ENCODE measurements at regions of chr2 and their contacts with region 1.

Region 1: GRCh38 chr2:28751252-28751955 is at the start of gene PPP1CB:
- DNase-seq: peak; percentile 96
- ATAC-seq: peak; percentile 92
- H3K4me3 ChIP-seq: peak within 1 kb of the TSS; percentile 93
- H3K27ac ChIP-seq: peak within 1 kb of the TSS; percentile 99
- H3K4me1 ChIP-seq: peaks cover 9% of the 10 kb centered on the region
- H3K27me3 ChIP-seq: no peaks in the 10 kb centered on the region
- CTCF ChIP-seq: peak; percentile 38
- POLR2A ChIP-seq: peak; percentile 72; the same call in 1 of the 2 replicates
- RAD21 ChIP-seq: peak; percentile 14; the same call in 1 of the 2 replicates
- total RNA-seq, gene PPP1CB: 111 and 271 TPM in 2 replicates

Region 2: GRCh38 chr2:28583899-28584553 is 167.4 kb before region 1 on chr2:
- CTCF ChIA-PET with region 1: no interaction called
- POLR2A ChIA-PET with region 1: no interaction called
- dilution Hi-C with region 1: no loop called
- in situ Hi-C with region 1: loop called (anchors 5 kb)
- intact Hi-C with region 1: no loop called
- DNase-seq: peak; percentile 97
- ATAC-seq: peak; percentile 95
- H3K4me3 ChIP-seq: peak overlapping the region; percentile 9; the same call in 1 of the 2 replicates
- H3K27ac ChIP-seq: peak overlapping the region; percentile 82
- H3K4me1 ChIP-seq: peaks cover 13% of the 10 kb centered on the region
- H3K27me3 ChIP-seq: no peaks in the 10 kb centered on the region
- CTCF ChIP-seq: no peak
- POLR2A ChIP-seq: no peak
- RAD21 ChIP-seq: no peak

Region 3: DNA sequence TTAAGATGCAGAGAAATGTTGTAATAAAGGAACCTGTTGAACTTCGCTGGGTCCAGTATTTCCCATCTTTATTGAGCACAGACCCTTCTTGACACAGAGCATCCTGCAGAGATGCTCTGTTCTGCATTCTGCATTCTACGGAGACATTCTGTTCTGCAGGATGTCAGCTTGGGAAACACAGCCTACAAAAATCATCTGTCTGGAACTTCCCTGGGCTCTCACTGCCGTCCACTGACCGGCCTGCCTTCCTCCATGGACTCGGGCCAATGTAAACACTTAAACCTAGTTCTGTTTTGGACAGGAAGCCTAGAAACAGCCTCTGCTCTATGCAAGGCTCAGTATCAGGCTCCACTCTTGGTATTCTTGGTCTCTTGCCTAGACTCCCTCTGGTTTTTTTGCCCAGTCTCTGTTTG is 89.8 kb before region 1 on chr2:
- CTCF ChIA-PET with region 1: interaction called, 6 read pairs
- POLR2A ChIA-PET with region 1: interaction called, 3 read pairs
- dilution Hi-C with region 1: no loop called
- in situ Hi-C with region 1: no loop called
- intact Hi-C with region 1: loop called (anchors 1 kb)
- DNase-seq: peak; percentile 88
- ATAC-seq: peak; percentile 5
- H3K4me3 ChIP-seq: no peak overlapping the region
- H3K27ac ChIP-seq: peak overlapping the region; percentile 49; the same call in 1 of the 2 replicates
- H3K4me1 ChIP-seq: peaks cover 34% of the 10 kb centered on the region
- H3K27me3 ChIP-seq: no peaks in the 10 kb centered on the region
- CTCF ChIP-seq: no peak
- POLR2A ChIP-seq: no peak
- RAD21 ChIP-seq: no peak; the same call in 1 of the 2 replicates

Region 4: GRCh38 chr2:28716265-28716867 is 35.0 kb before region 1 on chr2:
- CTCF ChIA-PET with region 1: interaction called, 3 read pairs
- POLR2A ChIA-PET with region 1: no interaction called
- dilution Hi-C with region 1: no loop called
- in situ Hi-C with region 1: no loop called
- intact Hi-C with region 1: loop called (anchors 2 kb)
- DNase-seq: peak; percentile 98
- ATAC-seq: peak; percentile 91
- H3K4me3 ChIP-seq: no peak overlapping the region; the same call in 1 of the 2 replicates
- H3K27ac ChIP-seq: peak overlapping the region; percentile 47; the same call in 1 of the 2 replicates
- H3K4me1 ChIP-seq: peaks cover 7% of the 10 kb centered on the region
- H3K27me3 ChIP-seq: no peaks in the 10 kb centered on the region
- CTCF ChIP-seq: no peak
- POLR2A ChIP-seq: no peak
- RAD21 ChIP-seq: 0 out of 2 replicates have a peak, but pooled peaks have one; percentile 10